SK-MEL-5 (cell line): ENCODE measurements at regions of chr6 and their contacts with region 1.

Region 1: DNA sequence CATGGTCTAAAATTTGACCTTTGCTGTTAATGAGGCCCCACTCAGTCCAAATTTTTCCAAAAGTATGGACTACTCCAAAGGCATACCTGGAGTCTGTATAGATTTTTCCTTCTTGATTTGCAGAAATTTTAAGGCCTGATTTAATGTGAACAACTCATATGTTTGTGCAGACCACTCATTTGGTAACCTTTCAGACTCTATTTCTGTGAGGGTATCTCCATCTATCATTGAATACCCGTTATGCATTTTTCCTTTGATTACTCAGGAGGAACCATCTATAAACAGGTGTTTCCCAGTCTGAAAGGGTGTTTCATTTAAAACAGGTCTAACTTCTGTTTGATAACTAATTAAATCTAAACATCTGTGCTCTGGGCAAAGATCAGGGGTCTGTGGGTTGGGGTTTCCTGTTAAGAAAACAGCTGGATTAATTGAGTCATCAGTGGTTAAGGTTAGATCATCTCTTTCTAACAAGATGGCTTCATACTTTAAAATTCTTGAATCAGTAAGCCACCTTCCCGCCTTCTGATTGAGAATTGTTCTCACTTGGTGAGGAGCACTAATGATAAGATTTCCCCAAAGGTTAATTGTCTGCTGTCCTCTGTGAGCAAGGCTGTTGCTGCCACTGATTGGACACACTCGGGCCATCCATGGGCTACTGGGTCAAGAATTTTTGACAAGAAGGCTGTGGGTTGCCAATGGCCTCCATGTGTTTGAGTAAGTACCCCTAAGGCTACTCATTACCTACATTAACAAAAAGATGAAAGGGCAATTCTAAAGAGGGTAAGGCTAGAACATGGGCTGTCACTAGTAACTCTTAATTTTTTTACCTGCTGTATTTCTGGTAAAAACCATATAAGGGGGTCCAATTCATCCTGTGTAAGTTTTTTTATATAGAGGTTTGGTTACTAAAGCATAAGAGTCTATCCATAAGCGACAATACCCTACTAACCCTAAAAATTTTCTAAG is 24.1 kb downstream of the HLA-B start:
- DNase-seq: no peak

Region 2: GRCh38 chr6:31246050-31246521 is 86.8 kb before region 1 on chr6:
- in situ Hi-C with region 1: loop called (anchors 25 kb)
- DNase-seq: peak; percentile 64